ENCODE measurements at regions of chr1 and their contacts with region 1.

Region 1: DNA sequence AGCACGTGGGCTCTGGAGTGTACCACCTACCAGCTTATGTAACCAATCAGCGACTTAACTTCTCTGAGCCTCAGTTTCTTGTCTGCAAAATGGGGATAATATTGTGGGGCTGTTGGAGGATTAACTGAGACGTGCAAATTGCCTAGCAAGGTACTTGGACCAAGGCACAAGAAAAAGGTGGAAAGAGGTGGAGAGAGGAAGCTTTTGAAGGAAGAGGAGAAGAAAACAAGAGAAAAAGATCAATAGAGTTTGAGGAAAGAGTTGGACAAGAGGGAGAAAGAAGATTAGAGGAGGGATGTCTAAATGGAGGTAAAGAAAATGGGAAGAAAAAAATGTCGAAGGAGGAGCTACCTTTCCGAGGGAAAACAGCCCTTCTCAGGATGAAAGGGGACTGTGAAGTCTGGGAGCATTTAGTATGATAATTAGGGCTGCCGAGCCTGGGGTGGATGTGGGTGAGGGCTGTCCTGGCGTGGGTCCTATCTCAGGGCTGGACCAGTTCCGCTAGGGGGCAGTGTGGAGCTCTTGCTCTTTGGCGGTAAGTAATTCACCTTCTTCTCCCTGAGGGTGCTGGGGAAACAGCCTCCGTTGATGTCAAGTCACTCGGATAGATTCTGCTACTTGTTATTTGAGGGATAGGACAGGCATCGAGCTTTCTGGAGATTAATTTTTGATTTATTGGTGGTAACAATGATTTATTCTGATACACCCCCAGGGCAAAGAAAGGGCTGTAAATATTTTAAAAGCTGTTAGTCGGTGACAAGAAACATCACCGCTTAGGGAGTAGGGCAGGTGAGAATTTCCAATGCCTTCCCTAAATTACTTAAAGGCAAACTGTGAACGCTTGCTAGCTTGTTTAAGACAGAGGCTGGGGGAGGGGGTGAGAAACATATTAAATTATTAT is 79.0 kb upstream of the NFASC start:
- DNase-seq: peak; percentile 93
- H3K4me3 Mint-ChIP-seq: no peak overlapping the region
- H3K27ac Mint-ChIP-seq: no peak overlapping the region
- H3K4me1 Mint-ChIP-seq: peaks cover 6% of the 10 kb centered on the region
- H3K27me3 Mint-ChIP-seq: peaks cover 25% of the 10 kb centered on the region

Region 2: GRCh38 chr1:204726478-204726877 is 65.2 kb before region 1 on chr1:
- intact Hi-C with region 1: no loop called
- DNase-seq: no peak
- H3K4me3 Mint-ChIP-seq: no peak overlapping the region
- H3K27ac Mint-ChIP-seq: no peak overlapping the region
- H3K4me1 Mint-ChIP-seq: peaks cover 4% of the 10 kb centered on the region
- H3K27me3 Mint-ChIP-seq: peaks cover 12% of the 10 kb centered on the region

Region 3: GRCh38 chr1:204806943-204807687 is 15.4 kb after region 1 on chr1:
- intact Hi-C with region 1: loop called (anchors 1 kb)
- DNase-seq: peak; percentile 95
- H3K4me3 Mint-ChIP-seq: peak overlapping the region; percentile 89
- H3K27ac Mint-ChIP-seq: peak overlapping the region; percentile 61
- H3K4me1 Mint-ChIP-seq: peaks cover 6% of the 10 kb centered on the region
- H3K27me3 Mint-ChIP-seq: peaks cover 16% of the 10 kb centered on the region